GM12878 (cell line): ENCODE measurements at regions of chr11 and their contacts with region 1.

Region 1: DNA sequence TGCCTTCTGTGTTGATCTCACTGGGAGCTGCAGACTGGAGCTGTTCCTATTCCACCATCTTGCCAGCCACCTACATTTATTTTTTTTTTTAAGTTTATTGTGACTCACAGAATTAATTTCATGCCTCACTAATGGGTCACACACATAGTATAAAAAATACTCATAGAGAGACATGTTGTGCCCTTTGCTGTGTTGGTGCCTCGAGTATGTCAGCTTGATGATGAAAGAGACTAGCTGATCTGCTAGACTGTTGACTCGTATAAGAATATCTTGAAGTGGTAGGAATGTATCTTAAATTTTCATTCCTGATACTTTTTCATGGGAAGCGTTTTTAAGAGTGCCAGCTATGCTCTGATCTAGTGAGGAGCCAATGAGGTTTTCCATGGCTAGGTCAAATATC is 28.6 kb upstream of the AMPD3 start:
- DNase-seq: no peak
- ATAC-seq: no peak
- H3K4me3 ChIP-seq: no peak overlapping the region
- H3K27ac ChIP-seq: no peak overlapping the region
- H3K4me1 ChIP-seq: no peaks in the 10 kb centered on the region
- H3K27me3 ChIP-seq: no peaks in the 10 kb centered on the region; a peak in 3 of 4 replicates
- CTCF ChIP-seq: no peak
- EP300 ChIP-seq: no peak
- POLR2A ChIP-seq: no peak
- RAD21 ChIP-seq: no peak

Region 2: DNA sequence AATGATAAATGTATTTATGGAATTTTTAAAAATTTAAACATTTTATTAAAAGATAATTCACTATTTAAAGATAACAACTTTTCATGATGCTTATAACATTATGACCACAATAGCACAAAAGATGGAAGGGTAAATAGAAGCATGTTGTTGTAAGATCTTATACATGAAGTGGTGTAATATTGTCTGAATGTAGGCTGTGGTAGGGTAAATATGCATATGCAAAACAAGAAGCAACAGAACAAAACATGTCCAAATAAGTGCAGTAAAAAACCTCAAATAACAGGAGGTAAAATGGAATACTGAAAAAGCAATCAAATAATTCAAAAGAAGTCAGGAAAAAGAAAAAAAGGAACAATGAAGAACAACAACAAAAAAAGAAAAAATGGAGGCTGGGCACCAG is 65.6 kb before region 1 on chr11:
- CTCF ChIA-PET with region 1: no interaction called
- POLR2A ChIA-PET with region 1: no interaction called
- RAD21 ChIA-PET with region 1: no interaction called
- SMC1A ChIA-PET with region 1: no interaction called
- in situ Hi-C with region 1: no loop called
- intact Hi-C with region 1: no loop called
- DNase-seq: no peak
- ATAC-seq: no peak
- H3K4me3 ChIP-seq: no peak overlapping the region
- H3K27ac ChIP-seq: no peak overlapping the region
- H3K4me1 ChIP-seq: no peaks in the 10 kb centered on the region
- H3K27me3 ChIP-seq: peaks cover 0 to 7% of the 10 kb centered on the region in 2 experiments; a peak in 1 of 4 replicates
- CTCF ChIP-seq: no peak
- EP300 ChIP-seq: no peak
- POLR2A ChIP-seq: no peak
- RAD21 ChIP-seq: no peak

Region 3: GRCh38 chr11:10441652-10442503 is 15.4 kb after region 1 on chr11:
- CTCF ChIA-PET with region 1: interaction called, 11 read pairs
- POLR2A ChIA-PET with region 1: no interaction called
- RAD21 ChIA-PET with region 1: no interaction called
- SMC1A ChIA-PET with region 1: interaction called, 20 read pairs
- in situ Hi-C with region 1: no loop called
- intact Hi-C with region 1: no loop called
- DNase-seq: peak; percentile 82
- ATAC-seq: peak; percentile 96
- H3K4me3 ChIP-seq: no peak overlapping the region
- H3K27ac ChIP-seq: no peak overlapping the region; the same call in 1 of the 2 replicates
- H3K4me1 ChIP-seq: peaks cover 18% of the 10 kb centered on the region
- H3K27me3 ChIP-seq: peaks cover 0 to 3% of the 10 kb centered on the region in 2 experiments; a peak in 1 of 4 replicates
- CTCF ChIP-seq: no peak
- EP300 ChIP-seq: peak; percentile 72 to 88; a peak in 3 of 4 replicates
- POLR2A ChIP-seq: no peak
- RAD21 ChIP-seq: no peak

Region 4: GRCh38 chr11:10680956-10681487 is 254.5 kb after region 1 on chr11:
- CTCF ChIA-PET with region 1: no interaction called
- POLR2A ChIA-PET with region 1: no interaction called
- RAD21 ChIA-PET with region 1: no interaction called
- SMC1A ChIA-PET with region 1: no interaction called
- in situ Hi-C with region 1: no loop called
- intact Hi-C with region 1: no loop called
- DNase-seq: no peak
- ATAC-seq: no peak
- H3K4me3 ChIP-seq: no peak overlapping the region
- H3K27ac ChIP-seq: no peak overlapping the region
- H3K4me1 ChIP-seq: no peaks in the 10 kb centered on the region
- H3K27me3 ChIP-seq: no peaks in the 10 kb centered on the region; a peak in 2 of 4 replicates
- CTCF ChIP-seq: no peak
- EP300 ChIP-seq: no peak
- POLR2A ChIP-seq: no peak
- RAD21 ChIP-seq: no peak